ENCODE measurements at regions of chr7 and their contacts with region 1.

Region 1: GRCh38 chr7:92833024-92833765 is 3.2 kb downstream of the CDK6 start:
- DNase-seq: peak; percentile 67 to 89
- H3K4me3 ChIP-seq: peak overlapping the region; percentile 61
- H3K4me1 ChIP-seq: peaks cover 38% of the 10 kb centered on the region
- H3K27me3 ChIP-seq: peaks cover 14% of the 10 kb centered on the region

Region 2: DNA sequence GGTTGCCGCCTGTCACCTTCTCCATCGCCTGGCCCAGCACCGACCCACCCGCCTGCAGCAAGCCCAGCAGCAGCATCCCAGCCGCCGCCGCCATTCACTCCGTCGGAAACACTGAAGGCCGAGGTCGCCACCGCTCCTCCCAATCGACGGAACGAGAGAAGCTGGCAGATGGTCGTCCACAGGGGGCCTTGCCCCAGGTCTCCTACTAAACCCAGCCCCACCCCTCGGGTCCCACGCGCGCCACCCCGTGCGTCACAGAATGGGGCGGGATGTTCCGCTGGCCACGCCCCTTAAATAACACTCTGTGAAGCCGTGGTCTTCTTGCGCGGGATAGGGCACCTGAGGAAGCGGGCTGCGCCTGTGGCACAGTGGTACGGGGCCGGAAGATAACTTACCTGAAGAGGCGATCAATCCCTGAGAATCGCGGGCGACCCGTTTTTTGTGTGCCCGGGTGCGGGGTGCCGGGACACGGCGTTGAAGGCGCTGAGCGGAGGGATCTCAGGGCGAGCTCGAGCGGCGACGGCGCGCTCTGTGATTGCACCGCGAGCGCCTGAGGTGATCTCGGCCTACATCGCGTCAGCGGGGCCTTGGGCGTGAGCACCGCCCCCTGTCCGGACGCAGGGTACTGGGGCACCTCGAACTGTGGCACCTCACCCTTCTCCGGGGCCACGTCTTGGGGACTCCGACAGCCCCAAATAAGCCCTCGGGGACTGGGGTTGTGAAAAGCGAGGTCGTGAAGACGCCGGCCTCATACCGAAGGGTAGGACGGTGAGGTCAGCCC is 698.7 kb before region 1 on chr7 and contains the start of gene CYP51A1:
- in situ Hi-C with region 1: no loop called
- DNase-seq: peak; percentile 79 to 94
- H3K4me3 ChIP-seq: peak within 1 kb of the TSS; percentile 87
- H3K4me1 ChIP-seq: peaks cover 16% of the 10 kb centered on the region
- H3K27me3 ChIP-seq: no peaks in the 10 kb centered on the region

Region 3: GRCh38 chr7:92621026-92621540 is 212.1 kb before region 1 on chr7:
- in situ Hi-C with region 1: loop called (anchors 10 kb)
- DNase-seq: peak; percentile 77 to 80
- H3K4me3 ChIP-seq: no peak overlapping the region
- H3K4me1 ChIP-seq: no peaks in the 10 kb centered on the region
- H3K27me3 ChIP-seq: no peaks in the 10 kb centered on the region

Region 4: DNA sequence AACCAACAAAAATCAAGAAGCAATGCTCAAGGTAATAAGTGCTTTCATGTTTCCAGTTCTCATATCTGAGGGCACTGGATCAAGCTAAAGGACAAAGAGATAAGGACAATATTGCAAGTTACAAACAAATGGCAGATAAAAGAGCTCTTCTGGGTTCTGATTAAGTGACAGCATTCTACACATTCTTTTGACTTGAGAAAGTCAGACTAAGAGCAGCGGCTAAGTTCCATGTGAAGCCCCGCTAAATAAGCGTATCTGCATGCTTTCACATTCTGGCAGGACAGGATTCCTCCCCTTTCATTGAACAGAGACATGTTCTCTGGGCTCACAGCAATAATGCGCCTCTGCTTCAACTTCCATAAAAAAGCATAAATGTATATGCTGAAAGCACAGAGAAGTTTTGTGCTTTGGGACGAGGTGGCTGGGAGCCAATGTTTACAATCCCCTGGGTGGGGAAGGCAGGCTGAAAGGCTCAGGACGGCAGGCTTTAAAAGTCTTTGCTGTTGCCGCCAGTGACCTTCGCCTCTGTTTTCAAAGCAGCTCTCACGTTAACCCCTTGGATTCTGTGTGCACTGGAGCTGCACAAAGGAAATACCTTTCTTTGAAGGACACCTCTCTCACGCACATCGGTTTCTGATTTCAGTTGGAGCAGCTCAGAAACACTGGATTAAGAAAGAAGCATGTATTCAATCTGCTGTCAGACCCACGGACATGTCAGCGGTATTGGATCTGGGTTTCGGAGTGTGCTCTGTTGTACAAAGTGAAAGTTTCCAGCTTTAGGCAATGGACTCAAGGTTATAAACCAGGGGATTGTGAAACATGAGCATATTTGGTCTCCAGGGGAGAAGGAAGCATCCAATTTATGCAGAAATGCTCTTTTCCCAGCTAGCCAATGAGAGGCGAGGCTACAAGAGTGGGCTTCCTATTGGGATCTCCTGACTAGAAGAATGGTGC is 137.6 kb before region 1 on chr7:
- in situ Hi-C with region 1: loop called (anchors 5 kb)
- DNase-seq: peak; percentile 80 to 81
- H3K4me3 ChIP-seq: peak overlapping the region; percentile 20
- H3K4me1 ChIP-seq: peaks cover 17% of the 10 kb centered on the region
- H3K27me3 ChIP-seq: no peaks in the 10 kb centered on the region